ENCODE measurements at regions of chr9 and their contacts with region 1.

Region 1: DNA sequence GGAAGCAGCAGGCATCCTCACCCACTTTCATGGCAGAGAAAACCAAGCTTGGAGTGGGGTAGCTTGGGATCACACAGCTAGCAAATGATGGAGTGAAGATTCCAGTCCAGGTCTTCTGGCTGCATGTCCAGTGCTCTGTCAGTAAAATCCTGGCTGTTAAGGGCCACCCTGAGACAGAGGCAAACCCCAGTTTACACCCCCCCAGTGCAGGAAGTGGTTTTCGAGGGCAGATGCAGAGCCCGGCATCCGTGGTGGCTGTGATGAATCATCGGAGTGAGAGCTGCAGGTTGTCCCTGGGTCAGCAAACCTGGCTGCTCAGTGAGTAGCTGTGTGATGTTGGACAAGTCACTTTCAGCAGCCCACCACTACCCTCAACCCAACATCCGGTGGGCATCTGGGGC is 115.4 kb downstream of the RGS3 start:
- DNase-seq: peak in 2 of 5 donors; percentile 77 to 80
- ATAC-seq: peak in 2 of 4 donors; percentile 5 to 11
- H3K4me3 ChIP-seq: no peak overlapping the region
- H3K27ac ChIP-seq: peak overlapping the region in 11 of 12 donors; percentile 78 to 99 (median 85)
- H3K4me1 ChIP-seq: peaks cover 19 to 95% (median 74%) of the 10 kb centered on the region in 12 donors
- H3K27me3 ChIP-seq: no peaks in the 10 kb centered on the region
- CTCF ChIP-seq: no peak
- POLR2A ChIP-seq: no peak

Region 2: DNA sequence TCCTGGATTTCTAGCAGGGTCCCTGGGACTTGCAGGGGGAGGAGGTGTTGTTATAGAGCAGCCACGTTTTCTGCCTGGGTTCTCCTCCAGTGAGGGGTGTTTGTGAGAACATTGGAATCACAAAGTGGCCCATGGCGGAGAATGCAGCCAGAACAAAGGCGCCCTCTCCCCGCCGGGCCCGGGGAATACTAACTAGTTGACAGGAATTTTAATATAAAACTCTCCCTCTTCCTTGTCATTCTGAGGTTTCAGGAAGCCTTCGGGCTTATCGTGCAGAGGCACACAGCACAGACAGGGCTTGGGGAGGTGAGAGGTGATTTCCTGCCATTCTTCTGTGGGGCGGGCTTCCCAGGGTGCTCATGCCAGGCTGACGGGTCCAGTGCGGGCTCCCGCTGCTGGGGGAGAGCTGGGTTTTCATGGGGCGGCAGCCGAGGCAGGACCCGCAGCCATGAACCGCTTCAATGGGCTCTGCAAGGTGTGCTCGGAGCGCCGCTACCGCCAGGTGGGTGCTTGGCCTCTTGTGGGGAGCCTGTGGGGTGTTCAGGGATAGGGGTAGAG is 77.7 kb before region 1 on chr9:
- intact Hi-C with region 1: loop called in 3 of 10 experiments (anchors 5 to 10 kb)
- DNase-seq: peak in 4 of 5 donors; percentile 59 to 72 (median 68)
- ATAC-seq: peak in 3 of 4 donors; percentile 66 to 77 (median 72)
- H3K4me3 ChIP-seq: peak overlapping the region; percentile 23 to 71 (median 62)
- H3K27ac ChIP-seq: peak overlapping the region; percentile 67 to 91 (median 87)
- H3K4me1 ChIP-seq: peaks cover 0 to 64% (median 30%) of the 10 kb centered on the region in 12 donors
- H3K27me3 ChIP-seq: no peaks in the 10 kb centered on the region
- CTCF ChIP-seq: peak in 2 of 12 donors; percentile 25 to 27
- POLR2A ChIP-seq: peak in 1 of 2 donors; percentile 40

Region 3: GRCh38 chr9:113511856-113512761 is 66.8 kb before region 1 on chr9:
- intact Hi-C with region 1: loop called in 2 of 10 experiments (anchors 5 to 10 kb)
- DNase-seq: no peak
- ATAC-seq: no peak
- H3K4me3 ChIP-seq: no peak overlapping the region
- H3K27ac ChIP-seq: peak overlapping the region in 11 of 12 donors; percentile 55 to 84 (median 76)
- H3K4me1 ChIP-seq: peaks cover 0 to 64% (median 38%) of the 10 kb centered on the region in 12 donors
- H3K27me3 ChIP-seq: no peaks in the 10 kb centered on the region
- CTCF ChIP-seq: no peak
- POLR2A ChIP-seq: no peak

Region 4: DNA sequence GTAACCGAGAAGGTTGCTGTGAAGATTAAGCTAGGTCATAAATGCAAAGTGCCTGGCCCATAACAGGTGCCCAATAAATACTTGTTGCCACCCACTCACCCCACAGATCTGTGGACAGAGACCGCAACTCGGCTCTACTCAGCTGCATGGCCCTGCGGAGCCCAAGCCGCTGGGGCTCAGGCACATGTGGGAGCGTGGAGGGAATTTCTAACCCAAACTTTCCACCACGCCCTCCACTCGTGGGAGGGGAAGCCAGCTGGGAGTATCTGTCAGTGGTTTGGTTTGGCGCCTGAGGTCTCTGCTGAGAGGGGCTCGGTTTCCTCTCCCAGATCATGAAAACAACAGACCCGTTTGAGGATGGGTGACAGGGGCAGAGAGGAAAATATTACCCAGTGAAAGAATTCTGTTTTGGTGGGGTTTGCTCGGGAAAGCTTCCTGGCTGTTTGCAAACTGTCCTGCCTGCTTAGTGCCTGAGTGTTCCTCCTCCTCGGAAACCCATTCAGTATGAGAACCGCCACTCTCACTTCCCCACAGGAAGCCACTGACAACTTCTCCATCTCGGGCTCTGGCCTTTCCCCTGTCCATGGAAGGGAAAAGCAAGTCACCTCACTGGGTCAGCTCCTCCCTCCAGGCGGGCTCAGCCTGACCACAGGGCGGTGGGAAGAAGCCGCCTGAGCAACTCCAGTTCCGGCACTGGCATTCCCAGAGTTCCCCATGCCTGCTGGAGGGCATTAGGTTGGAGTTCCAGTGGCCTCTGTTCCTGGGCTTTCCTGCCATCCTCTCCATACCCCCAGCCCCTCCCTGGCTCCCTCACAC is 55.3 kb before region 1 on chr9:
- intact Hi-C with region 1: loop called in 1 of 10 experiments (anchors 10 kb)
- DNase-seq: peak; percentile 69 to 81 (median 77)
- ATAC-seq: peak; percentile 17 to 69 (median 62)
- H3K4me3 ChIP-seq: peak overlapping the region in 3 of 12 donors; percentile 4 to 39 (median 17)
- H3K27ac ChIP-seq: peak overlapping the region; percentile 49 to 86 (median 80)
- H3K4me1 ChIP-seq: peaks cover 23 to 98% (median 81%) of the 10 kb centered on the region in 12 donors
- H3K27me3 ChIP-seq: no peaks in the 10 kb centered on the region
- CTCF ChIP-seq: no peak
- POLR2A ChIP-seq: no peak

Region 5: GRCh38 chr9:113530022-113530635 is 48.8 kb before region 1 on chr9:
- intact Hi-C with region 1: loop called in 2 of 10 experiments (anchors 5 to 10 kb)
- DNase-seq: no peak
- ATAC-seq: no peak
- H3K4me3 ChIP-seq: no peak overlapping the region
- H3K27ac ChIP-seq: peak overlapping the region in 1 of 12 donors; percentile 4
- H3K4me1 ChIP-seq: peaks cover 0 to 65% (median 38%) of the 10 kb centered on the region in 12 donors
- H3K27me3 ChIP-seq: no peaks in the 10 kb centered on the region
- CTCF ChIP-seq: no peak
- POLR2A ChIP-seq: no peak

Region 6: DNA sequence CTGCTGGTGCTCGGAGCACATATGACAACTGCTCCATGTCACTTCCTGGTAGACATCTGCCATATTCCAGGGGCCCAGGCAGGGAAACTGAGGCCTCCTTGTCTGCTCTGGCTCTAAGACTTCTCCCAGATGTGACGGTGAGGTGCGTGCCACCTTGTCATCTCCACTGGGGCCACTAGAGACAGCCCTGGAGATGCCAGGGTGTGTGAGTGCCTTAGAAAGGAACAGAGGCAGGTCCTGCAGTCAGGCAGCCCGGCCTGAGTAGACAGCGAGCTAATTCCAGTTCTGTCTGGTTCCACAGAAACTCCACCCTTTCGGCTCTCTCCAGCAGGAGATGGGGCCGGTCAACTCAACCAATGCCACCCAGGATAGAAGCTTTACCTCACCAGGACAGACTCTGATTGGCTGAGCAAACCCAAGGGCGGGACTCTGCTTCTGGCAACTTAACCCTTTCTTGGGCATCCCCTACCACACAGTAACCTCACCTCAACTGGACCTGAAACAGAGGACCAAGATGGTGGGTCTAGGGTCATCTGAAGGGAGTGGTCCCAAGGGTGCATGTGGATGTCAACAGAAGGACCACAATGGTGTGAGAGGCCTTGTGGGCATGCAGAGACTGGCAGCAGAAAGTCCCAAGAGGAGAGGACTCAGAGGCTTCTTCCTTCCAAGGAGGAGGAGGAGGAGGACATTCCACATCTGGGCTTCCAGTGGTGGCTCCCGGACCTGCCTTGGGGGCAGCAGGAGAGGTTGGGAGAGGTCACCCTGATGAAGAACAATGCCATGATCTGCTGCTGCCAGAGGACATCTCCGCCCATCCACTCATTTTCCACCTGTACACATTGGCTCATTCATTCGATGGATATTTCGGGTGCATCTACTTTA is 37.6 kb before region 1 on chr9:
- intact Hi-C with region 1: loop called in 1 of 10 experiments (anchors 5 kb)
- DNase-seq: peak in 3 of 5 donors; percentile 28 to 57 (median 47)
- ATAC-seq: peak in 3 of 4 donors; percentile 8 to 55 (median 49)
- H3K4me3 ChIP-seq: no peak overlapping the region
- H3K27ac ChIP-seq: peak overlapping the region in 7 of 12 donors; percentile 21 to 71 (median 65)
- H3K4me1 ChIP-seq: peaks cover 2 to 95% (median 59%) of the 10 kb centered on the region in 12 donors
- H3K27me3 ChIP-seq: no peaks in the 10 kb centered on the region
- CTCF ChIP-seq: peak in 1 of 12 donors; percentile 5
- POLR2A ChIP-seq: no peak